ENCODE measurements at regions of chr3 and their contacts with region 1.

Region 1: GRCh38 chr3:8970971-8971589 is 7.8 kb upstream of the RAD18 start:
- DNase-seq: no peak
- ATAC-seq: peak; percentile 84
- H3K4me3 ChIP-seq: no peak overlapping the region
- H3K27ac ChIP-seq: no peak overlapping the region
- H3K4me1 ChIP-seq: no peaks in the 10 kb centered on the region
- H3K27me3 ChIP-seq: no peaks in the 10 kb centered on the region
- CTCF ChIP-seq: peak; percentile 91 to 96 (median 92)
- EP300 ChIP-seq: no peak
- POLR2A ChIP-seq: no peak
- RAD21 ChIP-seq: peak; percentile 97

Region 2: GRCh38 chr3:9122732-9123364 is 151.8 kb after region 1 on chr3:
- CTCF ChIA-PET with region 1: no interaction called
- POLR2A ChIA-PET with region 1: no interaction called
- RAD21 ChIA-PET with region 1: no interaction called
- SMC1A ChIA-PET with region 1: no interaction called
- in situ Hi-C with region 1: no loop called
- intact Hi-C with region 1: no loop called
- DNase-seq: no peak
- ATAC-seq: no peak
- H3K4me3 ChIP-seq: no peak overlapping the region
- H3K27ac ChIP-seq: no peak overlapping the region
- H3K4me1 ChIP-seq: no peaks in the 10 kb centered on the region
- H3K27me3 ChIP-seq: no peaks in the 10 kb centered on the region; a peak in 1 of 4 replicates
- CTCF ChIP-seq: no peak
- EP300 ChIP-seq: no peak
- POLR2A ChIP-seq: no peak
- RAD21 ChIP-seq: no peak

Region 3: DNA sequence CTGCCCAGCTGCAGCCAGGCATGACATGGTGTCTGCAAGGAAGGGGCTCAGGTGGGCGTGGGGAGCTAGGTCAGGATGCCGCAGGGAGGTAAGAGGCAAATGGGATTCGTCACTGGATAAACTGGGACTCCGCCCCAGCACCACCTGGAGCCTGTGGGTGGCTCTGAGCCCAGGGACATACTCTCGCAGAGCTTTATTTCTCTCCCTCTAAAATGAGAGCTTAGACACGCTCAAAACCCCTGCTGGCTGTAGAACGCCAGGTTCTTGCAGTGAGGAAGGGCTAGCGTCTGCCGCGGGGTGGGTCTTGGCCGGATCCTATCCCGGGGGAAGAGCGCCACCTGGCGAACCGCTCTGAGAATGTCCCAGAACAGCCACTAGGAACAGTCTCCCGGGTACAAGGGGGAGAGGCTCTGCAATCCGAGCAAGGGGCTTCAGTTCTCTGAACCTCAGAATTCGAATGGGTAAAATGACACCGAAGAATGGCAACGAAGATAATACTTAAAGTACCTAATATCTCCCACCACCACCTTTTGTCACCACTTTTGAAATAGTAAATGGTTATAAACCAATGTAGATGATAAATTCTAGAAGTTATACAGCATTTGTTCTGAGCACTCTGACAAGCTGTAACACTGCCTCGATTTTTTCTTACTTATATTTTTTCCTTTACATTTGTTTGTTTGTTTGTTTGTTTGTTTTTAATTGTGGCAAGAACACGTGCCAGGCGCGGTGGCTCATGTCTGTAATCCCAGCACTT is 331.5 kb after region 1 on chr3:
- CTCF ChIA-PET with region 1: interaction called, 20 read pairs
- POLR2A ChIA-PET with region 1: no interaction called
- RAD21 ChIA-PET with region 1: interaction called, 11 read pairs
- SMC1A ChIA-PET with region 1: interaction called, 25 read pairs
- in situ Hi-C with region 1: loop called (anchors 5 kb)
- intact Hi-C with region 1: loop called (anchors 1 kb)
- DNase-seq: no peak
- ATAC-seq: peak; percentile 100
- H3K4me3 ChIP-seq: no peak overlapping the region
- H3K27ac ChIP-seq: no peak overlapping the region
- H3K4me1 ChIP-seq: no peaks in the 10 kb centered on the region
- H3K27me3 ChIP-seq: no peaks in the 10 kb centered on the region
- CTCF ChIP-seq: peak; percentile 81 to 92 (median 82); a peak in 5 of 6 replicates
- EP300 ChIP-seq: no peak
- POLR2A ChIP-seq: no peak
- RAD21 ChIP-seq: peak; percentile 81